PC-3 (cell line): ENCODE measurements at regions of chr2 and their contacts with region 1.

Region 1: DNA sequence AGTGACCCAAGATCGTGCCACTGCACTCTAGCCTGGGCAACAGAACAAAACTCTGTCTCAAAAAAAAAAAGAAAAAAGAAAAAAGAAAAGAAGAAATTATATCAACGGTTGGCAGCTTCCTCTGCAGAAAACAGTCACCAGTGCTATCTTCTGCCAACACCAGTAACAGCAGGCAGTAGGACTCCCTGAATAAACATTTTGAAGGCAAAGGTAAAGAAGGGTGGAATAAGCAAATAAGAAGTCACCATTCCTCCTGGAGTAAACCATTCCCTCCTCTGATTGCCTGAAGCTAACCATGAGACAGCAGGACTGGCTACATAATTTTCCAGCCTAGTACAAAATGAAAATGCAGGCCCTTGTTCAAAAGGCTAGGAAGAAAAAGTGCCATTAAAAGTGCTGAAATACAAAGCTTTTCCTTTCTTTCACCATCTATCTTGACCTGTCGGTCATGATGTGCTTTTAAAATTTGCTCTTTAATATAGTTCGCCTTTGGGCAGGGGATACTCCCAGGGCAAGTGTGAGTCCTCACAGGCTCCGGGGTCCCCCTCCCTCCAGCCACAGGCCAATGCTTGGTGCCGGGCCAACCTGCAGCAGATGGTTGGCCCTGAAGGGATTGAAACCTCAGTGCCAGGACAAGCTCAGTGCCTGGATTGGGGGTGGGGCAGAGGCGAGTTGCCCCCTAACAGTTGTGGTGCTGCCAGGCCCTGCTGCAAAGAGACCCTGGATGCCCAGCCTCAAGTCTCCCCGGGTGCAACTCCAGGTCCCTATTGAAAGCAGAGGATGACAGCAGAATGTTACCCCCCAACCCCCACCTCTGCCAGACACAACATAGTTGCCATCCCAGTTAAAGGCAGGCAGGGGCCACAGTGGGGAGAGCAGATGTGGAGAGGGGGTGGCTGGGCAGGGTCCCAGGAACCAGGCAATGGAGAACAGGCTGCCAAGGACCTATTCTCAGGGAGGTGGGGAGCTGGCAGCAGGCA is 9.3 kb upstream of the RNF103 start:
- DNase-seq: peak; percentile 63
- ATAC-seq: peak; percentile 86
- H3K4me3 ChIP-seq: no peak overlapping the region
- H3K27ac ChIP-seq: peak overlapping the region; percentile 57
- H3K4me1 ChIP-seq: peaks cover 21% of the 10 kb centered on the region
- H3K27me3 ChIP-seq: no peaks in the 10 kb centered on the region
- CTCF ChIP-seq: no peak

Region 2: GRCh38 chr2:85551698-85552678 is 1081.0 kb before region 1 on chr2:
- CTCF ChIA-PET with region 1: no interaction called
- POLR2A ChIA-PET with region 1: no interaction called
- intact Hi-C with region 1: no loop called
- DNase-seq: peak; percentile 92
- ATAC-seq: peak; percentile 41
- H3K4me3 ChIP-seq: no peak overlapping the region
- H3K27ac ChIP-seq: no peak overlapping the region
- H3K4me1 ChIP-seq: peaks cover 16% of the 10 kb centered on the region
- H3K27me3 ChIP-seq: no peaks in the 10 kb centered on the region
- CTCF ChIP-seq: peak; percentile 96

Region 3: DNA sequence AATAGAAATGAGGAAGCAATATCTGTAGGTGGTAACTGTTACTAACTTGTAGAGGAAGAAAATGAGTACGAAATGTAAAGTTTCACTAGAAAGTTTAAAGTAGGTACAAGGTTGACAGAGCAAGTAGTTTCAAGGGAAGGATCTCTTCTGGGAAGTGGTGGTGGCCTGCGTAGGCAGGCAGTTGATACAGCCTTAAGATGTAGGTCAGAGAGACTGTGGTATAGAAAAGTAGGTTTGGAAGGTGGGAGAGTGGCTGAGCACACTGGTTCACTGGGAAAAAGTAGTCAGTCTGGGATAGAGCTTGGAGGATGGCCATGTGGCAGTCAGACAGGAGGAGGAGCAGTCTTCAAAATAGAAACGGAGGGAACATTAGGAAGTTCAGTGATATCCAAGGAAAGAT is 168.3 kb before region 1 on chr2:
- CTCF ChIA-PET with region 1: no interaction called
- POLR2A ChIA-PET with region 1: no interaction called
- intact Hi-C with region 1: no loop called
- DNase-seq: no peak
- ATAC-seq: no peak
- H3K4me3 ChIP-seq: no peak overlapping the region
- H3K27ac ChIP-seq: no peak overlapping the region
- H3K4me1 ChIP-seq: no peaks in the 10 kb centered on the region
- H3K27me3 ChIP-seq: no peaks in the 10 kb centered on the region
- CTCF ChIP-seq: no peak

Region 4: GRCh38 chr2:86704459-86704971 is 71.6 kb after region 1 on chr2:
- CTCF ChIA-PET with region 1: no interaction called
- POLR2A ChIA-PET with region 1: no interaction called
- intact Hi-C with region 1: loop called (anchors 2 kb)
- DNase-seq: peak; percentile 93
- ATAC-seq: peak; percentile 87
- H3K4me3 ChIP-seq: peak overlapping the region; percentile 58
- H3K27ac ChIP-seq: peak overlapping the region; percentile 80
- H3K4me1 ChIP-seq: peaks cover 27% of the 10 kb centered on the region
- H3K27me3 ChIP-seq: no peaks in the 10 kb centered on the region
- CTCF ChIP-seq: no peak